ENCODE measurements at regions of chr13 and their contacts with region 1.

Region 1: GRCh38 chr13:50911937-50912795 is 2.6 kb downstream of the RNASEH2B start:
- DNase-seq: peak; percentile 92
- ATAC-seq: peak; percentile 56
- H3K4me3 ChIP-seq: peak overlapping the region; percentile 71 to 94 (median 87)
- H3K4me3 Mint-ChIP-seq: peak overlapping the region; percentile 95
- H3K27ac ChIP-seq: peak overlapping the region; percentile 95 to 98
- H3K27ac Mint-ChIP-seq: peak overlapping the region; percentile 97
- H3K4me1 ChIP-seq: peaks cover 56 to 59% of the 10 kb centered on the region in 2 donors
- H3K4me1 Mint-ChIP-seq: peaks cover 70% of the 10 kb centered on the region
- H3K27me3 ChIP-seq: no peaks in the 10 kb centered on the region
- H3K27me3 Mint-ChIP-seq: no peaks in the 10 kb centered on the region
- CTCF ChIP-seq: peak; percentile 89

Region 2: GRCh38 chr13:49936085-49936940 is 975.9 kb before region 1 on chr13 and contains the start of gene SPRYD7:
- CTCF ChIA-PET with region 1: interaction called, 6 read pairs
- POLR2A ChIA-PET with region 1: no interaction called
- intact Hi-C with region 1: loop called (anchors 1 kb)
- DNase-seq: peak; percentile 98
- ATAC-seq: peak; percentile 97
- H3K4me3 ChIP-seq: peak within 1 kb of the TSS; percentile 76 to 94 (median 84)
- H3K4me3 Mint-ChIP-seq: peak within 1 kb of the TSS; percentile 88
- H3K27ac ChIP-seq: peak within 1 kb of the TSS; percentile 64 to 90
- H3K27ac Mint-ChIP-seq: peak within 1 kb of the TSS; percentile 86
- H3K4me1 ChIP-seq: peaks cover 15 to 17% of the 10 kb centered on the region in 2 donors
- H3K4me1 Mint-ChIP-seq: peaks cover 31% of the 10 kb centered on the region
- H3K27me3 ChIP-seq: no peaks in the 10 kb centered on the region
- H3K27me3 Mint-ChIP-seq: no peaks in the 10 kb centered on the region
- CTCF ChIP-seq: peak; percentile 80
- total RNA-seq, gene SPRYD7: 3.8 and 4.5 TPM in 2 replicates

Region 3: GRCh38 chr13:50123862-50124536 is 788.2 kb before region 1 on chr13:
- CTCF ChIA-PET with region 1: interaction called, 33 read pairs
- POLR2A ChIA-PET with region 1: interaction called, 34 read pairs
- intact Hi-C with region 1: loop called (anchors 1 kb)
- DNase-seq: peak; percentile 84
- ATAC-seq: peak; percentile 62
- H3K4me3 ChIP-seq: peak overlapping the region; percentile 77 to 98 (median 98)
- H3K4me3 Mint-ChIP-seq: peak overlapping the region; percentile 92
- H3K27ac ChIP-seq: peak overlapping the region; percentile 73 to 98
- H3K27ac Mint-ChIP-seq: peak overlapping the region; percentile 96
- H3K4me1 ChIP-seq: peaks cover 50 to 54% of the 10 kb centered on the region in 2 donors
- H3K4me1 Mint-ChIP-seq: peaks cover 64% of the 10 kb centered on the region
- H3K27me3 ChIP-seq: peaks cover 0 to 12% (median 6%) of the 10 kb centered on the region in 4 experiments
- H3K27me3 Mint-ChIP-seq: peaks cover 7% of the 10 kb centered on the region
- CTCF ChIP-seq: no peak

Region 4: DNA sequence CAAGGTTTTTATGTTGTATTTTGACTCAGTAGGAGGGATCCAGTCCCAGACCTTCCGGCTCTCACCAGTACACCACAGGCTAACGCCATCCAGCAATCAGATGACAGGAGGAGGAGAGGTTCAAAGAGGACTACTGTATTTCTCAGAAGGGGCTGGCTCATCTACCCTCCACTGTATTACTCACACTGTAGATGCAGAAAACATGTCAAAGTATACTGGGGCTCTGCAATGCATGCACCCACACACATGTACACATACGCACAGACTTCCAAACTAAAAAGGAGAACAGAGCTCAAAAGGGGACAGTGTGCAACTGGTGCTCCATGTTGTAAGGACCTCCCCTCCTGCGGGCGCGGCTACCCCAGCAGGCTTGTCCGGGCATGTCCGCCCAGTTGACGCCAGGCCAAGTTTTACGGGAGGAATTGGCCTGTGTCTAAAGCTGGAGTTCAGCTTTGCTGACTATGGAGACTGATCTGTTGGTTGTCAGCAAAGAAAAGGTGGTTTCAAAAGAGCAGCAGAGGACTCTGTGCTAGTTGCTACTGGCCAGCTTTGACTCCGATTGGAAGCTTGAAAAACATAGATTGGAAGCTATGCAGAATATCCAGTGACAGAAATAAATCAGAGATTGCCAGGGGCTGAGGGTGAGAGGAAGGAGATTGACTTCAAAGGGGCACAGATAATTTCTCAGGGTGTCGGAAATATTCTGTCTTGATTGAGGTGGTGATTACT is 382.8 kb before region 1 on chr13:
- CTCF ChIA-PET with region 1: interaction called, 7 read pairs
- POLR2A ChIA-PET with region 1: no interaction called
- intact Hi-C with region 1: loop called (anchors 5 kb)
- DNase-seq: no peak
- ATAC-seq: no peak
- H3K4me3 ChIP-seq: no peak overlapping the region
- H3K4me3 Mint-ChIP-seq: no peak overlapping the region
- H3K27ac ChIP-seq: no peak overlapping the region
- H3K27ac Mint-ChIP-seq: no peak overlapping the region
- H3K4me1 ChIP-seq: peaks cover 24 to 25% of the 10 kb centered on the region in 2 donors
- H3K4me1 Mint-ChIP-seq: peaks cover 35% of the 10 kb centered on the region
- H3K27me3 ChIP-seq: no peaks in the 10 kb centered on the region
- H3K27me3 Mint-ChIP-seq: no peaks in the 10 kb centered on the region
- CTCF ChIP-seq: no peak

Region 5: DNA sequence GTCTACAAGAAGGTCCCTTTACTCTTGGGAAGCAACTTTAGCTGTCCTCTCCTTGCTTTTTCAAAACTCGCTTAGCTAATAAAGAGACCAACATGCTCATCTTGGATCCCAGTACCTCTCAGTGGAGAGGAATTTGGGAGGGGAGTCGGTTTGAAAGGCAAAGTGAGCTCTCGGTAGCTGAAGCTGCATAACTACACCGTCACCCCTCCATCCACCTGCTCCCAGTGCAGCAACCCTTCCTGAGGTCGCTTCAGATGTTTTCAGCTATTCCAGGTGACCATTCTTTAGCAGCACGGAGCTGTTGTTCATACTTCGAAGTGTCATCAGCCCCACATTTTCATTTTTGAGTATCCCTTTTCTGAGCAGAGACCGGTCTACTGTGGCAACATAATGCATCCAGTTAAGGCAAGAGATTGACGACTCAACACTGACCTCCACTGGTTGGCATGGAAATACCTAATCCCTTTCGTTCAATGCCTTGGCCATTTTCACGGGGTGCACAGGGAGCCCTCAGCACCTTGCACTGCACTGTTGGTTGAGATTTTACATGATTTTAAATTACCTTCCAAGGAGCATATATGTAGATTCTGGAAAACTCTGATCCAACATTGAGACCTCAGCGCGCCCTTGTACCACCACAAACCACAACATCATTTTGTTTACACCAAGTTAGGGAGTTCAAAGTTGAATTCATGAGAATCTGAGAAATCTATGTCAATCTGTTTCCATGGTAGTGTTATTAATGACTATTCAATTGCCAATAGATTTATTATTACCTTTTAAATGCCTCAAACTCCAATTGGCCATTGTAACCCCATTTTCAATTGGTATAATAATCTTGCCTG is 110.9 kb before region 1 on chr13:
- CTCF ChIA-PET with region 1: interaction called, 66 read pairs
- POLR2A ChIA-PET with region 1: interaction called, 6 read pairs
- intact Hi-C with region 1: loop called (anchors 1 kb)
- DNase-seq: peak; percentile 91
- ATAC-seq: peak; percentile 82
- H3K4me3 ChIP-seq: peak overlapping the region in 2 of 5 experiments; percentile 31 to 47
- H3K4me3 Mint-ChIP-seq: peak overlapping the region; percentile 73
- H3K27ac ChIP-seq: peak overlapping the region; percentile 78 to 88
- H3K27ac Mint-ChIP-seq: peak overlapping the region; percentile 91
- H3K4me1 ChIP-seq: peaks cover 46 to 47% of the 10 kb centered on the region in 2 donors
- H3K4me1 Mint-ChIP-seq: peaks cover 44% of the 10 kb centered on the region
- H3K27me3 ChIP-seq: no peaks in the 10 kb centered on the region
- H3K27me3 Mint-ChIP-seq: no peaks in the 10 kb centered on the region
- CTCF ChIP-seq: peak; percentile 85

Region 6: DNA sequence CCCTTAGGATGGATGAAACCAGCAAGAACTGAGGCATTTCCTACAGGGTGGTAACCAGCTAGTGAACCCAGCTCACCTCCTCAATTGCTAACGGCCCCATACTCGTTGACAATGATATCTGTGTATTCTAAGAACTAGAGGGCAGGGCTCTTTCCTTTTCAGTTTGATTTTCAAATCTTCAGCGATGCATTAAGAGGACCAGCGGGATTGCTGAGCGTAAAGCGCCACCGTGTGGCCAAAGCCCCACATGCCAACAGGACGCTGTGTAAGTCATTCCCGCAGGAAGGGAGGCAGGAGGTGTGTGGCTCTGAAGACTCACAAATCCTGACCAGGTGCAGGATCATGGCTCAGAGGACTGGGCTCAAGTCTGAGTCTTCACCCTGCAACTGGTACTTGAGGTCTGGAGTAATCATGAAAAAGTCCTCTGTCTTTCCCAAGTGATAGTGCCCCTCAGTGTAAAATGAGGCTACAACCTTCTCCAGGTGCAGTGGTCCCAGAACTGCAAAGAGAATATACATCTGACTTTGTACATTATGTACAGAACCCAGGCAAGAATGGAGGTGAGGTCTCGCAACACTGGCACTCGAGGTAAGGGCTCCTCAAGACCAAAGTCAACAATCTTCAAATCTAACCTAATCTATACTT is 158.0 kb after region 1 on chr13:
- CTCF ChIA-PET with region 1: interaction called, 7 read pairs
- POLR2A ChIA-PET with region 1: no interaction called
- intact Hi-C with region 1: loop called (anchors 1 kb)
- DNase-seq: peak; percentile 83
- ATAC-seq: peak; percentile 91
- H3K4me3 ChIP-seq: no peak overlapping the region
- H3K4me3 Mint-ChIP-seq: no peak overlapping the region
- H3K27ac ChIP-seq: no peak overlapping the region
- H3K27ac Mint-ChIP-seq: no peak overlapping the region
- H3K4me1 ChIP-seq: peaks cover 11 to 19% of the 10 kb centered on the region in 2 donors
- H3K4me1 Mint-ChIP-seq: peaks cover 12% of the 10 kb centered on the region
- H3K27me3 ChIP-seq: peaks cover 0 to 20% (median 10%) of the 10 kb centered on the region in 4 experiments
- H3K27me3 Mint-ChIP-seq: peaks cover 30% of the 10 kb centered on the region
- CTCF ChIP-seq: peak; percentile 97